ENCODE measurements at regions of chr19 and their contacts with region 1.

Region 1: DNA sequence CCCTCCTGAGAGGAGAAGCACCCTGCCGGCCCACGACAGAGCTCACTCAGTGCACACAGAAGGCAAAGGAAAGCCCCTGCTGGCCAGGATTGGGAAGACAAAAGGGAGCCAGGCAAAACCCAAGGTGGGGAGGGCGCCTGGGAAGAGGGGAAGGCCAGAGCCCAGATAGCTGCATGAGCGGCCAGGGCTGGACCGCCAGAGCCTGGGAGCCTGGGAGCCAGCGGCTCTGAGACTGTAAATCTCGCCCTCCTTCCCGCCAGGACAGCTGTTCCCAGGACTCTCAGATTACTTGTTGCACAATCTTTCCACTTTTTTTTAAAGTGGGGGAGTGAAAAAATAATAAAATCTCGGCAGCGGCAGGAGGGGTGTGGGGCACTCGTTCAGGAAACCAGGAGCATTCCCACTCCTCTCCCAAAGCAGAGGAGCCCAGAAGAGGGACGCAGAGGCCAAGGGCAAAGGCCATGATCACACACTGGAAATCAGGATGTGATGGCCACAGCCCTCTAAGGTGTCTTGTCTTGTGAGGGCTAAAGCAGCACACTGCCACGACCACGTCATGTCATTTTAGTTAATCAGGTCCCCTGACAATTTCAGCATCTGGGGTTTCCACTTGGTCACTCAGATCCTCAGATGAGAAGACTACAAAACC is 19.6 kb upstream of the EPHX3 start:
- DNase-seq: peak; percentile 87

Region 2: GRCh38 chr19:15115111-15116053 is 136.5 kb before region 1 on chr19:
- intact Hi-C with region 1: loop called (anchors 5 kb)
- DNase-seq: peak; percentile 85

Region 3: DNA sequence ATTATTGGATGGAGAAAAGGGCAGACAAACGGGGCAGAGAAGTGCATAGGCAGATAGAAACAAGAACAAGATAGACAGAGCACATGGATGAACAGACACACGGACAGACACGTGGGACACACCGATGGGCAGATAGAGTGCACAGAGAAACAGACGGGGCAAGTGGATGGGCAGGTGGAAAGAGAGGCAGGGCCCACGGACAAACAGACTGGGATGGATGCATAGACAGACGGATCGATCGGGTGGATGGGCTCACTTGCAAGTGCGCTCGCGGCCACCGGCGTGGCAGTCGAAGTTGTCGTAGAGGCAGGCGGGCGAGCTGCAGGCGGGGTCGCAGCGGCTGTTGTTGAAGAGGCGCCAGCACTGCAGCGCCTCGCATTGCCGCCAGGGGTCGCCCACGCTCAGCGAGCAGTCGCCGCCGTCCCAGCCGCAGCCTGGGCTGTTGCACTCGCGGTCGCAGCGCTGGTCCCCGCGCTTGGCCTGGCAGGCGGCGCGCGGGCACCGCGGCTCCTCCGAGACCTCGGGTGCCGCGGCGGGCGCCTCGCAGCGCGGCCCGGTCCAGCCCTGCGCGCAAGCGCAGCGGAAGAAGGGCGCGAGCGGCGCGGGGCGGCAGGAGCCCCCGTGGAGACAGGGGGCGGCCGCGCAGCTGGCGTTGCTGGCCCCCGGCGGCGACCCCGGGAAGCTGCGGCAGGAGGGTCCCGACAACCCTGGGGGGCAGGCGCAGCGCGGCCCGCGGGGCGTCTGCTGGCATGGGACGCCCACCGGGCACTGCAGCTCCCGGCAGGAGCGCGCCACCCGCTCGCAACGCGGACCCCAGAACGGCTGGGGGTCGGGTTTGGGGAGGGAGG is 74.4 kb before region 1 on chr19:
- intact Hi-C with region 1: loop called (anchors 2 kb)
- DNase-seq: peak; percentile 94

Region 4: DNA sequence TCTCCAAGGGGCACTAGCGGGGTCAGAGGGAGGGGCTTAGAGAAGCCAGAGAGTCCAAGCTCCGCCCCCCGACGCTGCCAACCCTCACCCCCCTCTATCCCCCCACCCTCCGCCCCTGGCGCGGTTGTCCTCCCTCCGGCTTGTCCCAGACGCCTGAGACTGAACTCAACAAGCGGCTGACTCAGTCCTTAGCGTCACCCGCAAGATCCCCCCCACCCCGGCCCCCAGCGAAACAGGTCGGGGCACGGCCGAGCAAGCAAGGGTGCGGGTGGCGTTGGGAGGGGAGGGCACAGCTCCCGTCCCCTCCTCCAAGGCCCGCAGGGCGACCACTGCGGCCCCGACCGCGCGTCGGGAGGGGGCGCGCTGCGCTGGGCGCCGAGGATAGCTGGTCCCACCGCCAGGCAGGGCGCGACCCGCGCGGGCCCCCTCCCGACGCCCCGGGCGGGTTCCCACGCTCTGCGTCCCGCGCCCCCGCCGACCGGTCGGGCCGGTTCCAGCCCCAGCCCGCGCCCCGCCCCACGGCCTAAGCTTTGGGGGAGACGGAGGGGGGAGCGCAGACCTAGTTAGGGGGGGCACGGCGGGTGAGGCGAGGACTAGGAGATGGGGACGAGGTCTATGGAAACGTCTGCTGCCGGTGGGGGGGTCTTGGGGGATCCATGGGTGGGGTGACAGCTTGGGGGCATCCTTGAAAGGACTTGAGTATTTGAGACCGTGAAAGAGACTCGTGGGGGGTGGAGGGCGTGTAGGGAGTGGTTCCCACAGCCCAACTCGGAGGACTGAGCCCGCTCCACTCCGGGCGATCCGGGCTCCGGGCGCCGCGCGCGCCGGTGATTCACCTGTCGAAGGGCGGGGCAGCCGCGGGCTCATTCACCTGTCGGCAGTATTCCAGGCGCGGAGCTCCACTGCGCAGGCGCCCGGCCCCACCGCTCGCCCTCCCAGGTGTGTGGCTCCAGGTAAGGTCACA is 56.2 kb before region 1 on chr19:
- intact Hi-C with region 1: loop called (anchors 2 kb)
- DNase-seq: no peak